ENCODE measurements at regions of chr1 and their contacts with region 1.

Region 1: GRCh38 chr1:223845810-223846682 is at the start of gene TP53BP2:
- DNase-seq: peak; percentile 86 to 95 (median 90)
- ATAC-seq: peak; percentile 92
- H3K4me3 ChIP-seq: peak within 1 kb of the TSS; percentile 84
- H3K4me3 Mint-ChIP-seq: peak within 1 kb of the TSS; percentile 88 to 99 (median 96)
- H3K27ac ChIP-seq: peak within 1 kb of the TSS; percentile 99
- H3K27ac Mint-ChIP-seq: peak within 1 kb of the TSS; percentile 94 to 99 (median 98)
- H3K4me1 ChIP-seq: peaks cover 14 to 27% of the 10 kb centered on the region in 2 donors
- H3K4me1 Mint-ChIP-seq: peaks cover 23 to 53% (median 40%) of the 10 kb centered on the region in 7 donors
- H3K27me3 ChIP-seq: no peaks in the 10 kb centered on the region
- H3K27me3 Mint-ChIP-seq: peaks cover 0 to 4% (median under 1%) of the 10 kb centered on the region in 5 donors
- total RNA-seq, gene TP53BP2: 30.3 to 120 (median 45.4) TPM

Region 2: GRCh38 chr1:222617367-222617951 is 1228.6 kb before region 1 on chr1:
- CTCF ChIA-PET with region 1: no interaction called
- POLR2A ChIA-PET with region 1: no interaction called
- intact Hi-C with region 1: loop called in 1 of 2 experiments (anchors 10 kb)
- DNase-seq: peak; percentile 81 to 98 (median 89)
- ATAC-seq: peak; percentile 93
- H3K4me3 ChIP-seq: peak overlapping the region; percentile 74
- H3K4me3 Mint-ChIP-seq: peak overlapping the region; percentile 89 to 95 (median 93)
- H3K27ac ChIP-seq: peak overlapping the region; percentile 74
- H3K27ac Mint-ChIP-seq: peak overlapping the region; percentile 90 to 97 (median 95)
- H3K4me1 ChIP-seq: peaks cover 18 to 22% of the 10 kb centered on the region in 2 donors
- H3K4me1 Mint-ChIP-seq: peaks cover 14 to 39% (median 32%) of the 10 kb centered on the region in 7 donors
- H3K27me3 ChIP-seq: no peaks in the 10 kb centered on the region
- H3K27me3 Mint-ChIP-seq: peaks cover 5 to 51% (median 26%) of the 10 kb centered on the region in 5 donors

Region 3: DNA sequence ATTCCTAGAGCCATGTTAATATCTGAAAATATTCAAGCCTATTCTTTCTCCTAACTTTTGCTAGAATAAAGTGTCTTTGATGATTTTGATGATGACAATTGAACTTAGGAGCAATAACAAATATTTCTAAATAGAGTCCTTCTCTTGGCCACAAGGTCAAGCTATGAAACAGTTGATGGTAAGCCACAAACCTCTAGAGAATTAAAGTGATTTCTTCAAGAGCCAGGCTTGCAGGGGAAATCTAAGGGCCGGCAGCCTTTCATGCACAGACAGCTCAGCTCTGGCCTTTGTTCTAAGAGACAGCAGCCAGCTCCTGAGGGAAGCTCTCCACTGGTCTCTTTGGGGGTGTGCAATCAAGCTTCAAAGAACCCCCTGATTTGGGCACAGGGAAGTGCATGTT is 541.1 kb before region 1 on chr1:
- CTCF ChIA-PET with region 1: no interaction called
- POLR2A ChIA-PET with region 1: no interaction called
- intact Hi-C with region 1: no loop called
- DNase-seq: no peak
- ATAC-seq: no peak
- H3K4me3 ChIP-seq: no peak overlapping the region
- H3K4me3 Mint-ChIP-seq: no peak overlapping the region
- H3K27ac ChIP-seq: no peak overlapping the region
- H3K27ac Mint-ChIP-seq: no peak overlapping the region
- H3K4me1 ChIP-seq: peaks cover 0 to 28% of the 10 kb centered on the region in 2 donors
- H3K4me1 Mint-ChIP-seq: peaks cover 0 to 52% (median 45%) of the 10 kb centered on the region in 7 donors
- H3K27me3 ChIP-seq: no peaks in the 10 kb centered on the region
- H3K27me3 Mint-ChIP-seq: no peaks in the 10 kb centered on the region

Region 4: GRCh38 chr1:223363856-223364684 is 482.0 kb before region 1 on chr1 and contains the start of gene SUSD4:
- CTCF ChIA-PET with region 1: no interaction called
- POLR2A ChIA-PET with region 1: no interaction called
- intact Hi-C with region 1: loop called in 1 of 2 experiments (anchors 1 kb)
- DNase-seq: peak; percentile 54 to 87 (median 81)
- ATAC-seq: peak; percentile 92
- H3K4me3 ChIP-seq: peak within 1 kb of the TSS; percentile 83
- H3K4me3 Mint-ChIP-seq: peak within 1 kb of the TSS; percentile 83 to 96 (median 94)
- H3K27ac ChIP-seq: peak within 1 kb of the TSS; percentile 44
- H3K27ac Mint-ChIP-seq: peak within 1 kb of the TSS in 8 of 9 donors; percentile 61 to 91 (median 72)
- H3K4me1 ChIP-seq: no peaks in the 10 kb centered on the region
- H3K4me1 Mint-ChIP-seq: peaks cover 7 to 29% (median 27%) of the 10 kb centered on the region in 7 donors
- H3K27me3 ChIP-seq: no peaks in the 10 kb centered on the region
- H3K27me3 Mint-ChIP-seq: peaks cover 0 to 68% (median 0%) of the 10 kb centered on the region in 5 donors
- total RNA-seq, gene SUSD4: 0.10 to 20.3 (median 7.1) TPM

Region 5: GRCh38 chr1:223652436-223652941 is 193.6 kb before region 1 on chr1:
- CTCF ChIA-PET with region 1: no interaction called
- POLR2A ChIA-PET with region 1: no interaction called
- intact Hi-C with region 1: no loop called
- DNase-seq: no peak
- ATAC-seq: no peak
- H3K4me3 ChIP-seq: no peak overlapping the region
- H3K4me3 Mint-ChIP-seq: no peak overlapping the region
- H3K27ac ChIP-seq: no peak overlapping the region
- H3K27ac Mint-ChIP-seq: no peak overlapping the region
- H3K4me1 ChIP-seq: no peaks in the 10 kb centered on the region
- H3K4me1 Mint-ChIP-seq: peaks cover 0 to 3% (median 0%) of the 10 kb centered on the region in 7 donors
- H3K27me3 ChIP-seq: no peaks in the 10 kb centered on the region
- H3K27me3 Mint-ChIP-seq: peaks cover 0 to 15% (median 10%) of the 10 kb centered on the region in 5 donors

Region 6: GRCh38 chr1:223811634-223812415 is 34.2 kb before region 1 on chr1:
- CTCF ChIA-PET with region 1: interaction called, 20 read pairs
- POLR2A ChIA-PET with region 1: interaction called, 18 read pairs
- intact Hi-C with region 1: loop called (anchors 1 kb)
- DNase-seq: peak in 6 of 9 donors; percentile 24 to 58 (median 44)
- ATAC-seq: peak; percentile 72
- H3K4me3 ChIP-seq: no peak overlapping the region
- H3K4me3 Mint-ChIP-seq: peak overlapping the region in 2 of 10 donors; percentile 44 to 49
- H3K27ac ChIP-seq: no peak overlapping the region
- H3K27ac Mint-ChIP-seq: peak overlapping the region in 6 of 9 donors; percentile 19 to 63 (median 57)
- H3K4me1 ChIP-seq: peaks cover 0 to 22% of the 10 kb centered on the region in 2 donors
- H3K4me1 Mint-ChIP-seq: peaks cover 16 to 44% (median 39%) of the 10 kb centered on the region in 7 donors
- H3K27me3 ChIP-seq: no peaks in the 10 kb centered on the region
- H3K27me3 Mint-ChIP-seq: no peaks in the 10 kb centered on the region

Region 7: GRCh38 chr1:224113918-224114786 is 268.1 kb after region 1 on chr1 and contains the start of gene FBXO28:
- CTCF ChIA-PET with region 1: no interaction called
- POLR2A ChIA-PET with region 1: no interaction called
- intact Hi-C with region 1: loop called (anchors 10 kb)
- DNase-seq: peak; percentile 69 to 94 (median 88)
- ATAC-seq: peak; percentile 96
- H3K4me3 ChIP-seq: peak within 1 kb of the TSS; percentile 92
- H3K4me3 Mint-ChIP-seq: peak within 1 kb of the TSS; percentile 89 to 96 (median 92)
- H3K27ac ChIP-seq: peak within 1 kb of the TSS; percentile 92
- H3K27ac Mint-ChIP-seq: peak within 1 kb of the TSS; percentile 89 to 96 (median 94)
- H3K4me1 ChIP-seq: peaks cover 4 to 14% of the 10 kb centered on the region in 2 donors
- H3K4me1 Mint-ChIP-seq: peaks cover 11 to 41% (median 30%) of the 10 kb centered on the region in 7 donors
- H3K27me3 ChIP-seq: no peaks in the 10 kb centered on the region
- H3K27me3 Mint-ChIP-seq: peaks cover 0 to 26% (median 11%) of the 10 kb centered on the region in 5 donors
- total RNA-seq, gene FBXO28: 25.2 to 37.8 (median 26.5) TPM

Region 8: GRCh38 chr1:224356685-224357625 is 510.9 kb after region 1 on chr1 and contains the start of gene CNIH4:
- CTCF ChIA-PET with region 1: no interaction called
- POLR2A ChIA-PET with region 1: no interaction called
- intact Hi-C with region 1: loop called in 1 of 2 experiments (anchors 1 kb)
- DNase-seq: peak; percentile 79 to 95 (median 92)
- ATAC-seq: peak; percentile 99
- H3K4me3 ChIP-seq: peak within 1 kb of the TSS; percentile 67
- H3K4me3 Mint-ChIP-seq: peak within 1 kb of the TSS; percentile 87 to 98 (median 94)
- H3K27ac ChIP-seq: peak within 1 kb of the TSS; percentile 83
- H3K27ac Mint-ChIP-seq: peak within 1 kb of the TSS; percentile 71 to 95 (median 89)
- H3K4me1 ChIP-seq: peaks cover 16 to 27% of the 10 kb centered on the region in 2 donors
- H3K4me1 Mint-ChIP-seq: peaks cover 23 to 58% (median 44%) of the 10 kb centered on the region in 7 donors
- H3K27me3 ChIP-seq: no peaks in the 10 kb centered on the region
- H3K27me3 Mint-ChIP-seq: no peaks in the 10 kb centered on the region
- total RNA-seq, gene CNIH4: 28.1 to 42.0 (median 39.8) TPM